Left lung (tissue), 14 donors: ENCODE measurements at regions of chr10 and their contacts with region 1.

Region 1: GRCh38 chr10:78890506-78890905 is 178.3 kb upstream of the ZMIZ1 start:
- DNase-seq: no peak
- ATAC-seq: no peak
- H3K4me3 ChIP-seq: no peak overlapping the region
- H3K27ac ChIP-seq: no peak overlapping the region
- H3K4me1 ChIP-seq: no peaks in the 10 kb centered on the region
- H3K27me3 ChIP-seq: no peaks in the 10 kb centered on the region
- CTCF ChIP-seq: no peak

Region 2: DNA sequence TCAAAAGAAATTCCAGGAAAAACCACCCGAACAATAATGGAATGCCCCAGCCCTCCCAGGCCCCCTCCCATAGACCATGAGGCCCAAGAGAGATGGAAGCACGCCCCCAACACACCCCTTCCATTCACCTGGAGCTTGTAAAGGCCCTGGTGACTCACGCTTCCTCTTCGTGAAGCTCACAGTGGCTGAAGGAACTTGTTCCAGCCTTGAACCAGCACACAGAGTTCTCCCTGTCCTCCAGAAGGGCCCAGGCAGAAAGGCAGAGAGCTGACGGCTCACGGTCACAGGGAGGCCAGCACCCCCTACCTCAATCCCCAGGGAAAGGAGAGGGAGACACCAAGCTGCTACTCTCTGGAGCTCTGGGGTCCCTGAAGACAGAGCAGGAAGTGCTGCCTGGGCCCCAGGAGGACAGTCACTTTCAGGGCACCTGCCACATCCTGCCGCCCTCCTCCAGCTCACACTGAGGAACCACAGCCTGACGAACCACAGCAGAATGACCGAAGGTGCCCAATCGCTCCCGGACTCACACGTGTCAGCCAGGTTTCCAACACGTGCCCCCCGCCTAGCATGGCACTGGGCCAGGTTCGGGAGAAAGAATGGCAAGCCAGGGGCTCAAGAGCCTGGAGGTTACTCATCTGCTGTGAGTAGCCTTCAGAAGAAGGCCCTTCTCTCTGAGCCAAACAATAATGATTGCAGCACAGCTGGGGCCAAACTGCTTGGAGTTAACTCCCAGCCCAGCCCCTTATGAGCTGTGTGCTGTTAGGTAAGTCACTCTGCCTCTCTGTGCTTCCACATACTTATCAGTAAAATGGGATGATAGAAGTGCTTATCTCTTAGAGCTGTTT is 1016.7 kb before region 1 on chr10:
- intact Hi-C with region 1: no loop called
- DNase-seq: no peak
- ATAC-seq: peak; percentile 28
- H3K4me3 ChIP-seq: no peak overlapping the region
- H3K27ac ChIP-seq: no peak overlapping the region
- H3K4me1 ChIP-seq: peaks cover 0 to 18% of the 10 kb centered on the region in 2 donors
- H3K27me3 ChIP-seq: no peaks in the 10 kb centered on the region
- CTCF ChIP-seq: no peak

Region 3: DNA sequence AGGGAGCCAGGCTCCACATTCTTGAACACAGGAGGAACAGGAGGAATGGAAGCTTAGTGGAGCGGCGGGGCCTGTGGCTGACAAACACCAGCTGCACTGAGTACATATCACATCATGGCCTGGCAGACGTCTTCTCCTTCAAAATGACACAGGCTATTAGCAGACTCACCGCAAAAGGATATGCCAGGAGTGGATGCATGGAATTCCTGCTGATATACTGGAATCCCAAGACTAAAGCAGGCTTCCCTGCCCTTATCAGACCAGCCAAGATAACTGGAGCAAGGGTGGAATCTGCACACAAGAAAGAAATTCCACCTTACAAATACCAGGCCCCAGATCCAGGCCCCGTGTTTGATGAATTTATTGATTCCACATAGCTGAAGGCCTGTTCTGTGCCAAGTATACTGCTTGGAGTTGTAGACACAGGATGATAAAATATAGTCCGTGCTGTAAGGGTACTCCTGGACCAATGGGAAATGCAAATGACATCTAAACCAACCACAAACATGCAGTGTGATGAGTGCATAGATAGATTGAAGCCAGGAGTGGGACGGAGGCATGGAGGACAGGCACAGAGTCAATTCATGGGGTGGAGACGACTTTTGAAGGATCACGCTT is 302.2 kb before region 1 on chr10:
- intact Hi-C with region 1: no loop called
- DNase-seq: peak in 2 of 4 donors; percentile 87
- ATAC-seq: peak; percentile 53
- H3K4me3 ChIP-seq: no peak overlapping the region
- H3K27ac ChIP-seq: no peak overlapping the region
- H3K4me1 ChIP-seq: no peaks in the 10 kb centered on the region
- H3K27me3 ChIP-seq: no peaks in the 10 kb centered on the region
- CTCF ChIP-seq: no peak

Region 4: DNA sequence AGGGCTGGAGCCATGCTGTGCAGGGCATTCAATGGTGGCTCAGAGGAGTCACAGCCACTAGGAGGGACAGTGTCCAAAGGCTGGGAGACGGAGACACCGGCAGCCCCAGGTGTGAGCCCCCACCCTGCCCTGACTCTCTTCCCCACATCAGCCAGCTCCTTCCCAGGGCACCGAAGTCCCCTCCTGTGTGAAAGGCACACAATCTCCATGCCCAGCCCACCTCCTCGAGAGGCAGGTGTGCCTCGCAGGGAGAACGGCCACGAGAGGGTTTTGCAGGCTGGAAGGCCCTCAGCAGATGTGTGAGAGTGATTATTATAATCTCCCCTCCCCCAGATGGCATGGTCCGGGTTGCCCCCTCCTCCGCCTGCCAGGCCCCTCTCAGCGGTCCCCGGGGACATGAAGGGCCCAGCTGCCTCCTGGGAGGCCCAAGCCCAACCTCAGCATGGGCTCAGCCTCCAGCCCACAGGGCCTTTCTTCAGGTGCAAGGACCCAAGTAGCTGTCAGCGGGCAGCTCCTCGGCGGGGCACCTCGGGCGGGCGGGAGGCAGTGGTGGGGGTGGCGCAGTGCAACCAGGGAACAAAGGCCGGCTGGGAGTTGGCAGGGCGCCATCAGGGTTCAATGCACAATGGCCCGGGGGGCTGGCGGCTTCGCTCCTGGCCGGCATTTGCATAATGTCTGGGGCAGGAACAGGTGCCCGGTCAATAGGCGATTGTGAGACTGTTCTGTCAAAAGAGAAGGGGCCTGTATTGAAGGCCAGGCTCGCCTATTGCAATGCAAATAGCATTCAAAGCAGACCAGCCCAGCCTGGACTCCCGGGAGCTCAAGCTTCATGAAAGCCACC is 22.9 kb after region 1 on chr10:
- intact Hi-C with region 1: loop called in 1 of 2 experiments (anchors 2 kb)
- DNase-seq: peak in 1 of 4 donors; percentile 55
- ATAC-seq: no peak
- H3K4me3 ChIP-seq: no peak overlapping the region
- H3K27ac ChIP-seq: no peak overlapping the region
- H3K4me1 ChIP-seq: no peaks in the 10 kb centered on the region
- H3K27me3 ChIP-seq: no peaks in the 10 kb centered on the region
- CTCF ChIP-seq: no peak

Region 5: GRCh38 chr10:79027147-79028055 is 136.9 kb after region 1 on chr10:
- intact Hi-C with region 1: no loop called
- DNase-seq: peak in 1 of 4 donors; percentile 29
- ATAC-seq: no peak
- H3K4me3 ChIP-seq: no peak overlapping the region
- H3K27ac ChIP-seq: no peak overlapping the region
- H3K4me1 ChIP-seq: peaks cover 0 to 10% of the 10 kb centered on the region in 2 donors
- H3K27me3 ChIP-seq: no peaks in the 10 kb centered on the region
- CTCF ChIP-seq: no peak

Region 6: GRCh38 chr10:79127151-79127961 is 236.8 kb after region 1 on chr10:
- intact Hi-C with region 1: no loop called
- DNase-seq: peak in 3 of 4 donors; percentile 68 to 93 (median 93)
- ATAC-seq: peak; percentile 97
- H3K4me3 ChIP-seq: no peak overlapping the region
- H3K27ac ChIP-seq: peak overlapping the region; percentile 19 to 26
- H3K4me1 ChIP-seq: peaks cover 29 to 64% of the 10 kb centered on the region in 2 donors
- H3K27me3 ChIP-seq: no peaks in the 10 kb centered on the region
- CTCF ChIP-seq: no peak